ENCODE measurements at regions of chr5 and their contacts with region 1.

Region 1: GRCh38 chr5:91266184-91266705 is 116.9 kb downstream of the ARRDC3 start:
- DNase-seq: no peak
- H3K4me3 Mint-ChIP-seq: no peak overlapping the region
- H3K27ac Mint-ChIP-seq: no peak overlapping the region
- H3K4me1 Mint-ChIP-seq: peaks cover 22% of the 10 kb centered on the region
- H3K27me3 Mint-ChIP-seq: peaks cover 19% of the 10 kb centered on the region

Region 2: DNA sequence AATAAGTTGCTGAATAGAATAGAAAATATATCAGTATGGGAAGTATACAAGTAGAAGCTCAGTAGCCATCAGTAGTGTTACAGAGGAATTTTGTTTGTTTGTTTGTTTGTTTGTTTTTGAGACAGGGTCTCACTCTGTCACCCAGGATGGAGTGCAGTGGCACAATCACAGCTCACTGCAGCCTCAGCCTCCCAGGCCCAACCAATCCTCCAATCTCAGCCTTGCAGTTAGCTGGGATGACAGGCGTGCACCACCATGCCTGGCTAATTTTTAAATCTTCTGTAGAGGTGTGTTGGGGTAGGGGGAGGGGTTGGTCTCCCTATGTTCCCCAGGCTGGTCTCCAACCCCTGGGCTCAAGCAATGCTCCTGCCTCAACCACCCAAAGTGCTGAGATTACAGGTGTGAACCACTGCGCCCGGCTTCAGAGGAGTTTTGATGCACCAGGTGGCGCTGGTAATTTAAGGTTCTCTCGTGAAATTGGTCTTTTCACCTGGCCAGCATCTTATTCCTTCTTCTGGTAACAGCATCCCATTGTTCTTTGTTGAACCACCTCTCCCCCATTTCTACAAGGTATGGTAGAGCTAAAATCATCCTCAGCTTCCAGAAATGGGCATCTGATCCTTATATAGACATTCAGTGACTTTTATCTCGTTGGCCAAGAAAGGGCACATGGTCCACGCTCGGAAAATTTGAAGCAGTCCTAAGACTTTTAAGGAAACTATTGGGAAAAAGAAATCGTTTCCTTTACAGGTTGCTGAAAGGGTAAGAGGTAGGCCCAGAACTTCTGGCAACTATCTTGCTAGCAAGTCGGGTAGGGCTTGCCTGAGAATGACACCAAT is 40.2 kb before region 1 on chr5:
- intact Hi-C with region 1: loop called (anchors 5 kb)
- DNase-seq: peak; percentile 87
- H3K4me3 Mint-ChIP-seq: no peak overlapping the region
- H3K27ac Mint-ChIP-seq: no peak overlapping the region
- H3K4me1 Mint-ChIP-seq: peaks cover 3% of the 10 kb centered on the region
- H3K27me3 Mint-ChIP-seq: peaks cover 26% of the 10 kb centered on the region

Region 3: GRCh38 chr5:91280362-91281269 is 14.4 kb after region 1 on chr5:
- intact Hi-C with region 1: loop called (anchors 1 kb)
- DNase-seq: peak; percentile 95
- H3K4me3 Mint-ChIP-seq: peak overlapping the region; percentile 85
- H3K27ac Mint-ChIP-seq: peak overlapping the region; percentile 92
- H3K4me1 Mint-ChIP-seq: peaks cover 28% of the 10 kb centered on the region
- H3K27me3 Mint-ChIP-seq: peaks cover 4% of the 10 kb centered on the region

Measured in activated CD4-positive, alpha-beta T cell treated with anti-CD3 and anti-CD28 coated beads, Interleukin-2, amount 10 ng/mL, durations not matched to agents 24 days and 14 days (primary cell).